Psoas muscle (tissue), 8 donors: ENCODE measurements at regions of chr12 and their contacts with region 1.

Region 1: GRCh38 chr12:11648831-11649702 is at the start of gene ETV6:
- DNase-seq: peak; percentile 64 to 77
- ATAC-seq: peak; percentile 76 to 80 (median 80)
- H3K4me3 ChIP-seq: peak within 1 kb of the TSS; percentile 89
- H3K27ac ChIP-seq: peak within 1 kb of the TSS; percentile 91
- H3K4me1 ChIP-seq: peaks cover 34% of the 10 kb centered on the region
- H3K27me3 ChIP-seq: no peaks in the 10 kb centered on the region
- CTCF ChIP-seq: no peak
- total RNA-seq, gene ETV6: 4.5 to 22.9 (median 11.1) TPM

Region 2: GRCh38 chr12:11705010-11705409 is 55.9 kb after region 1 on chr12:
- intact Hi-C with region 1: loop called in 1 of 2 experiments (anchors 5 kb)
- DNase-seq: no peak
- ATAC-seq: peak; percentile 39 to 67 (median 42)
- H3K4me3 ChIP-seq: no peak overlapping the region
- H3K27ac ChIP-seq: peak overlapping the region; percentile 15
- H3K4me1 ChIP-seq: peaks cover 39% of the 10 kb centered on the region
- H3K27me3 ChIP-seq: no peaks in the 10 kb centered on the region
- CTCF ChIP-seq: no peak

Region 3: GRCh38 chr12:11758510-11759493 is 109.7 kb after region 1 on chr12:
- intact Hi-C with region 1: loop called in 1 of 2 experiments (anchors 5 kb)
- DNase-seq: no peak
- ATAC-seq: peak; percentile 55 to 77 (median 62)
- H3K4me3 ChIP-seq: no peak overlapping the region
- H3K27ac ChIP-seq: peak overlapping the region; percentile 77
- H3K4me1 ChIP-seq: peaks cover 52% of the 10 kb centered on the region
- H3K27me3 ChIP-seq: no peaks in the 10 kb centered on the region
- CTCF ChIP-seq: no peak

Region 4: DNA sequence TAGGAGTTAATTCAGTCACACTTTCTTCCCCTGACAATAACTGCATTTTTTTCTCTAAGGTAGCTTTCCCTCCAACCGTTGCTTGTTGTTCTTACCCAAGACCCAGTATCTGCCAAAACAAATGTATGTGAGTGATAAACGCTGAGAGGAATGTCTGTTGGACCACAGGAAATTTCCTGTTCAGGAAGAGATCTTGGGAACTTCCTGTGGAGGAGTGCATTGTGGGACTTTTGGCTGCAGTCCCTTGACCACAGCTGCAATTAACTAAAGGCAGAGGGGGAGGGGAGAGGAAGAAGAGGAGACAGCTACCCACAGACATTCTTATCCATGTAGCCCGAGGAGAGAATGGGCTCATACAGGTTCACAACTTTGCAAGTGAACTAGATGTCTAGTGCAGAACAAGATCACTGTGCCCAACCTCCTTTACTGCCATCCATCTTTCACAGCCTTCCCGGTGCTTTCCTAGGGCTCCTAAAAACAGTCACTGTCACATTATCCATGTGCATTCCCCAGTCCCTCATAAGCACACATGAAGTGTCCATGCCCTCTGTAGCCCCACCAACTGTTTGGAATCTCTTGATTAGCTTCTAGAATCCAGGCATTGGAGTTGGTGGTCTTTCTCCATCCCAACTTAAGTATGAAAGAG is 149.9 kb after region 1 on chr12:
- intact Hi-C with region 1: loop called (anchors 5 kb)
- DNase-seq: no peak
- ATAC-seq: no peak
- H3K4me3 ChIP-seq: no peak overlapping the region
- H3K27ac ChIP-seq: no peak overlapping the region
- H3K4me1 ChIP-seq: peaks cover 40% of the 10 kb centered on the region
- H3K27me3 ChIP-seq: no peaks in the 10 kb centered on the region
- CTCF ChIP-seq: no peak

Region 5: DNA sequence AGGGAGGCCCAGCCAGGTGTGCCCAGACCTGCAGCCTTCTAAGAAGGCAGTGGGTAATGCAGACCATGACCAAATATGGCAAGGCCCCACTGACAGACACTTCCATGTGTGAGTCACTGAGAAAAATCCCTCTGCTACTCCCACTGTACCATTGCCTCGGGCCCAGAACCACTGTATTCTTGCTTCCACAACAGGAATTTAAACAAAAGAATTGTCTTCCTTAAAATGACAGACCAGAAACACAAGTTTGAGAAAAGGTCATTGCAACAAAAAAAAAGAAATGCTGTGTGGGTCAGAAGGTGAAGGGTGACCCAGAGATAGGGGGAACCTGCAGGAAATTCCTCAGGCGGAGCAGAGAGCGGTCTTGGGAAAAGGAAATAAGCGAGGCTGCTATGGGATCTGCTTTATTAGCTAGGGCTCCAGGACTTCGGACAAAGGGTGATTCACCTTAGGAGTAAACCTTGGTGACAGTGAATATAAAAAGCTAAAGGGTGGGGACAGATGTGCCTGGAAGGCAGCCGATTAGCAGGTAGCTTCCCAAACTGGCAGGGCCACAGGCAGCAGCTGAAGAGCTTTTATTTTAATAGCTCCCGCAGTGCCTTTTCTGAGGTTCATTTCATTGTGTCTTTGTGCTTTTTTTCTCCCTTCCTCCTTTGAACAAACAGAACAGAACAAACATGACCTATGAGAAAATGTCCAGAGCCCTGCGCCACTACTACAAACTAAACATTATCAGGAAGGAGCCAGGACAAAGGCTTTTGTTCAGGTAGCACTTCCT is 236.4 kb after region 1 on chr12:
- intact Hi-C with region 1: loop called in 1 of 2 experiments (anchors 5 kb)
- DNase-seq: no peak
- ATAC-seq: peak in 1 of 4 donors; percentile 51
- H3K4me3 ChIP-seq: no peak overlapping the region
- H3K27ac ChIP-seq: peak overlapping the region; percentile 31
- H3K4me1 ChIP-seq: peaks cover 13% of the 10 kb centered on the region
- H3K27me3 ChIP-seq: no peaks in the 10 kb centered on the region
- CTCF ChIP-seq: no peak

Region 6: GRCh38 chr12:12032851-12033588 is 384.0 kb after region 1 on chr12:
- intact Hi-C with region 1: loop called in 1 of 2 experiments (anchors 5 kb)
- DNase-seq: peak; percentile 62 to 85
- ATAC-seq: peak; percentile 81 to 89 (median 84)
- H3K4me3 ChIP-seq: peak overlapping the region; percentile 60
- H3K27ac ChIP-seq: no peak overlapping the region
- H3K4me1 ChIP-seq: no peaks in the 10 kb centered on the region
- H3K27me3 ChIP-seq: no peaks in the 10 kb centered on the region
- CTCF ChIP-seq: peak; percentile 91